CD4-positive, alpha-beta memory T cell (primary cell): ENCODE measurements at regions of chr2 and their contacts with region 1.

Region 1: DNA sequence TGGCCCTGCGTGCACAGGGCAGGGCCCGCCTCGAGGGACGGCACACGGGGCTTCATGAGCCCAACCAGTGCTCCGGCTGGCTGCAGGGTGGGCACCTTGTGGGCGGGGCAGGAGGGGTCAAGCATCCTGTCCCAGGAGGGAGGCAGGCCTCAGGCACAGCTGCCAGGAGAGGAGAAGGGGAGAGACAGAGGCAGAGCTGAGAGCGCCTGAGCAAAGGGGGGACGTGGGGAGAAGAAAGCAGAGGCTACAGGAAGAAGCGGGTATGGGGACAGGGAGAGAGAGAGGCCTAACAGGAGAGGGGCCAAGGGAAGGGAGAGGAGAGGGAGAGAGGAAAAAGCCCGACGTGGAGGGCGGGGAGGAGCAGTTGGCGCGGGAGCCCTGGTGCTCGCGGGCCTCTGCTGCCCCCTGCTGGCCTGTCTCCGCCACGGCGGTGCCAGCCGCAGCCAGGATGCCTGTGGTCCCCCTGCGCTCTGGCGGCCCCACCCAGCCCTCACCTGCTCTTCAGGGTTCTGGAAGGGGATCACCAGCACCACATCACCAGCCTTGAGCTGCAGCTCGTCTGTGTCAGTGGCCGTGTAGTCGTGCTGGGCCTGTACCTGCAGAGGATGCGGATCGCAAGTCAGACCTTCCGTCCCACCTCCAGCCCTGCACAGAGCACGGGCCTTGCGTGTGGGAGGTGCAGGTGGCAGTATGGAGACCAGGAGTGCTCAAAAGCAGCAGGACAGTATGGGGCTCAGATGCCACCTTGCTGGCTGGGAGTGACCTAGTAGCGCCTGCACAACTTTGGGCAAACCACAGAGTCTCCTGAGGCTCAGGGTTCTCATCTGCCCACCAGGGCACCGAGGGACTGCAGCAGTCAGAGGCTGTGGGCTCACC is 56.8 kb downstream of the BIN1 start:
- DNase-seq: peak; percentile 51 to 66 (median 59)
- H3K4me3 ChIP-seq: no peak overlapping the region
- H3K4me3 Mint-ChIP-seq: no peak overlapping the region
- H3K27ac ChIP-seq: no peak overlapping the region
- H3K27ac Mint-ChIP-seq: peak overlapping the region in 4 of 7 donors; percentile 42 to 71 (median 55)
- H3K4me1 ChIP-seq: no peaks in the 10 kb centered on the region
- H3K4me1 Mint-ChIP-seq: peaks cover 0 to 13% (median 4%) of the 10 kb centered on the region in 4 donors
- H3K27me3 ChIP-seq: no peaks in the 10 kb centered on the region
- H3K27me3 Mint-ChIP-seq: no peaks in the 10 kb centered on the region

Region 2: DNA sequence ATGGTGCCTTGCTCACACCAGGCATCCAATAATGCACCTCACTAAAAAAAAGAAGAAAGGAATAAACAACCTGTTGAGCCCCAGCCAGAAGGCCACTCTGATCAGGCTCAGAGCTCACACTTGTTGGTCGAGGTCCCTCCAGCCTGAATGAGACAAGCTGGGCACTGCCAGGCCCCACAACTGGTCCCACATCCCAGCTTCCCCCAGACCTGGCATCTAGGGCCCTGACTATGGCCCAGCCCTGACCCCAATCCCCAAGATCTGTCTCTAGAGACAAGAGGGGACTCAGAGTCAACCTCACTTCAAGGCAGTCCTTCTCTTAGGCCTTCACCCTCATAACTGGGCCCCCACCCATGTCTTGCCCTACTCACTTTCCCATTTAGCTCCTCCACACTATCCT is 129.1 kb before region 1 on chr2:
- CTCF ChIA-PET with region 1: no interaction called
- POLR2A ChIA-PET with region 1: no interaction called
- intact Hi-C with region 1: no loop called
- DNase-seq: no peak
- H3K4me3 ChIP-seq: no peak overlapping the region
- H3K4me3 Mint-ChIP-seq: no peak overlapping the region
- H3K27ac ChIP-seq: no peak overlapping the region
- H3K27ac Mint-ChIP-seq: peak overlapping the region in 1 of 7 donors; percentile 19
- H3K4me1 ChIP-seq: no peaks in the 10 kb centered on the region
- H3K4me1 Mint-ChIP-seq: no peaks in the 10 kb centered on the region
- H3K27me3 ChIP-seq: no peaks in the 10 kb centered on the region
- H3K27me3 Mint-ChIP-seq: peaks cover 2 to 4% of the 10 kb centered on the region in 2 donors

Region 3: GRCh38 chr2:127039387-127040031 is 10.7 kb before region 1 on chr2:
- CTCF ChIA-PET with region 1: interaction called, 16 read pairs
- POLR2A ChIA-PET with region 1: no interaction called
- intact Hi-C with region 1: no loop called
- DNase-seq: no peak
- H3K4me3 ChIP-seq: no peak overlapping the region
- H3K4me3 Mint-ChIP-seq: no peak overlapping the region
- H3K27ac ChIP-seq: no peak overlapping the region
- H3K27ac Mint-ChIP-seq: peak overlapping the region in 3 of 7 donors; percentile 14 to 68 (median 65)
- H3K4me1 ChIP-seq: no peaks in the 10 kb centered on the region
- H3K4me1 Mint-ChIP-seq: peaks cover 0 to 5% (median 0%) of the 10 kb centered on the region in 4 donors
- H3K27me3 ChIP-seq: no peaks in the 10 kb centered on the region
- H3K27me3 Mint-ChIP-seq: no peaks in the 10 kb centered on the region

Region 4: DNA sequence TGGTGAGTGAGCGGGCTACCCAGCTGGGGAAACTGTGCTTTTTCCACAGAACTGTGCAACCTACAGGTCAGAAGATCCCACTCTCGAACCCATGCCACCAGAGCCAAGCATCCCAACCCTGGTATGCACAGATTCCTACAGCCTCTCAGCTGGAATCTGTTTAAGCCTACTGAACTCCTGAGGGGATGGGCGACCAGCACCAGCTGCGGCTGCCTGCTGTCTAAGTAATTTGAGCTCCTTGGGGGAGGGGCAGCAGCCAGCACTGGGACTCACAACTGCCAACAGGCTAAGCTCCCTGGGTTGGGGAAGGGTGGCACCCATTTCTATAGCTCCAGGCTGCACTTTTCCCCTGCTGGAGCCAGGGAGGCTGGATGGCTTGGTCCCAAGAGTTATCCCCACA is 158.1 kb after region 1 on chr2:
- CTCF ChIA-PET with region 1: no interaction called
- POLR2A ChIA-PET with region 1: no interaction called
- intact Hi-C with region 1: no loop called
- DNase-seq: no peak
- H3K4me3 ChIP-seq: no peak overlapping the region
- H3K4me3 Mint-ChIP-seq: no peak overlapping the region
- H3K27ac ChIP-seq: no peak overlapping the region
- H3K27ac Mint-ChIP-seq: no peak overlapping the region
- H3K4me1 ChIP-seq: no peaks in the 10 kb centered on the region
- H3K4me1 Mint-ChIP-seq: no peaks in the 10 kb centered on the region
- H3K27me3 ChIP-seq: no peaks in the 10 kb centered on the region
- H3K27me3 Mint-ChIP-seq: peaks cover 36 to 38% of the 10 kb centered on the region in 2 donors

Region 5: DNA sequence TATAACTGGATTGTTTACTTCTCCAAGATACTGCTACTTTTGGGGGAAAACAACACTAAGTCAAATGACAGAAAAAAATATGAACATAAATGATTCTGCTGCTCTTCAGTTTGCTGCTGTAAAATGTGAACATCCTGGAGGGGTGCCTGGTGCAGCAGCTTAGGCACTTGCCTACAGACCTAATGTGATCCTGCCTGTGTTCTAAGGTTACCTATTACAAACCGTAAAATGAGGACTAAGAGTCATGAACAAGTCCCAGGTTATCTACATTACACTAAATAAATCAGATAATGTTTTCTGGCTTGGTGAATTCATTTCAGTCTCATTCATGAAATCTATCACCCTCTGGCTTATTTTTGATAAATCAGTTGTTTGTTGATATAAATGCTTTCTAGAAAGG is 282.2 kb after region 1 on chr2:
- CTCF ChIA-PET with region 1: no interaction called
- POLR2A ChIA-PET with region 1: no interaction called
- intact Hi-C with region 1: no loop called
- DNase-seq: no peak
- H3K4me3 ChIP-seq: no peak overlapping the region
- H3K4me3 Mint-ChIP-seq: no peak overlapping the region
- H3K27ac ChIP-seq: no peak overlapping the region
- H3K27ac Mint-ChIP-seq: no peak overlapping the region
- H3K4me1 ChIP-seq: no peaks in the 10 kb centered on the region
- H3K4me1 Mint-ChIP-seq: peaks cover 0 to 5% (median 2%) of the 10 kb centered on the region in 4 donors
- H3K27me3 ChIP-seq: no peaks in the 10 kb centered on the region
- H3K27me3 Mint-ChIP-seq: no peaks in the 10 kb centered on the region